ENCODE measurements at regions of chr17 and their contacts with region 1.

Region 1: DNA sequence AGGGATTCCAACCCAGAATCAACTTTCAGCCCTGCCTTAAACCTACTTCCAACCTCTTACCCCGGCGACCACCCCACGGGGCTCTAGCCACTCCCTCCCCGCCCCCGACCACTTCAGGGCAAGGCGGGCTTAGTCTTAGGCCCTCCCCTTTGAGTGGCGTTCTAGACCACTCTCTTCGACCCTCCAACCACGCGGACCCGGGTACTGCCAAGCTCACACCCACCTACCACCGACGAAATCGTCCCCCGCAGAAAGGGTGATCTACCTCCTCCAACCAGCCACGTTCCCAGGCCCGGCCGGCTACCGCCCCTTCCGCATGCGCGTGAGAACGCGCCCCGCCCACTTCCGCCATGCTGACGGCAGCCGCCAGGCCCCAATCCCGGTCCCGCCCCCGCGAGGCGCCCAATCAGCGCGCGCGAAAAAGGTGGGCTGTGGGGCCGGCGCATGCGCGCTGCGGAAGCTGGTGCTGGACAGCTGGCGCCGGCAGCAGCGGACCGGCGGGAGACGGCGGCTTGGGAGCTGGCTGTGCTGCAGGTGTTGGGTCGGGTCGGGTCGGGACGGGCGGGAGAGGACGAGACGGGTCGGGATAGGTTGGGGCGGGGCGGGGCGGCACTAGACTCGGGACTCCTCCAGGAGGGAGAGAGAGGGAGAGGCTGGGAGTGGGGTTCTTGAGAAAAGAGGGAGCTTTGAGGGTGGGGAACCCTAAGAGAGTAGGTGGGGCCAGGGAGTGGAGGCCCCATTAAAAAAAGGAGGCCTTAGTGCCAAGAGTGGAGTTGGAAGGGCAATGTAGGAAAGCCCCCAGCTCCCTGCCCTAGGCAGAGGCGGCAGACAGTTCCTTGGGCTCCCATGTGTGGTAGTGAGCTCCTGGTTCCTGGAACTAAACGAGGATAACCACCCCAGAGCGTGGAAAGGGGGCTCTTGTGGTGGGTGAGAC is at the start of gene NAT9:
- DNase-seq: peak; percentile 85 to 99
- H3K4me3 ChIP-seq: peak within 1 kb of the TSS; percentile 73 to 81
- H3K27ac ChIP-seq: peak within 1 kb of the TSS; percentile 52 to 72
- H3K4me1 ChIP-seq: peaks cover 5 to 23% of the 10 kb centered on the region in 2 donors
- H3K27me3 ChIP-seq: no peaks in the 10 kb centered on the region
- CTCF ChIP-seq: no peak
- total RNA-seq, gene NAT9: 13.3 TPM

Region 2: DNA sequence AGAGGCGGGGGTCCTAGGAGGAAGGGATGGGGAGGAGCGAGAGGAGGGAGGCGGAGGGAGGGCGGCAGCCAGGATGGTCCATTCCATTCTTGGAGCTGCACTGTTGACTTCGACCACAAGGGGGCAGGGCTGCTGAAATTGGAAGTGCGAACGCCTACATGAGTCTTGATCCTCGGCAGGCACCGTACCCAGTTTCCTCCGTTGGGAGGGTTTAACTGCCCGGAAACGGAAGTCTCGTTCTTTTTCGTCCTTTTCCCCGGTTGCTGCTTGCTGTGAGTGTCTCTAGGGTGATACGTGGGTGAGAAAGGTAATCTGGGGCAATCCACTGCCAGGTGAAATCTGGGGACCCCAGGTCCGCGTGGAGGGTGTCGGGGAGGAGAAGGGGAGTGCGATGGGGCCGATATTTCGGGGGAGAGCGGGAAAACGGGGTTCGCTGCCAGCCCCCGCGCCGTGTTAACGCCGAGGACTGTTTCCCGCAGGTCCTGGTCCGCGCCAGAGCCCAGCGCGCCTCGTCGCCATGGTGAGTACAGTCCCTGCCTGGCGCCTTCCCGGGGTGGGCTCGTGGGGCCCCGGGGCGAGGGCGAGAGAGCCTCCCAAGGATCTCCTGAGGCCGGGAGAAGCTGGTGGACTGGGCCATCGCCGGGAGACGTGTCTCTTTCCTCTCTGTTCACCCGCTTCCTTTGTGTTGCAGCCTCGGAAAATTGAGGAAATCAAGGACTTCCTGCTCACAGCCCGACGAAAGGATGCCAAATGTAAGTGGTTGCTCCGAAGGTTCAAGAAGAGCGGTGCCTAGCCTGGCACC is 572.7 kb before region 1 on chr17 and contains the start of gene RPL38:
- intact Hi-C with region 1: loop called (anchors 10 kb)
- DNase-seq: peak; percentile 74 to 97
- H3K4me3 ChIP-seq: peak within 1 kb of the TSS; percentile 68 to 93
- H3K27ac ChIP-seq: peak within 1 kb of the TSS; percentile 76
- H3K4me1 ChIP-seq: peaks cover 9 to 15% of the 10 kb centered on the region in 2 donors
- H3K27me3 ChIP-seq: peaks cover 4% of the 10 kb centered on the region
- CTCF ChIP-seq: peak; percentile 88 to 96 (median 93)
- total RNA-seq, gene RPL38: 243 TPM

Region 3: GRCh38 chr17:74442670-74443515 is 333.4 kb before region 1 on chr17:
- intact Hi-C with region 1: loop called (anchors 10 kb)
- DNase-seq: peak; percentile 69 to 90
- H3K4me3 ChIP-seq: peak overlapping the region; percentile 14 to 49
- H3K27ac ChIP-seq: peak overlapping the region; percentile 94 to 98
- H3K4me1 ChIP-seq: peaks cover 23 to 58% of the 10 kb centered on the region in 2 donors
- H3K27me3 ChIP-seq: no peaks in the 10 kb centered on the region
- CTCF ChIP-seq: no peak